Heart left ventricle (tissue), 16 donors: ENCODE measurements at regions of chr16 and their contacts with region 1.

Region 1: GRCh38 chr16:78122774-78123315 is 23.4 kb downstream of the WWOX start:
- DNase-seq: no peak
- ATAC-seq: peak; percentile 67 to 89 (median 68)
- H3K4me3 ChIP-seq: no peak overlapping the region
- H3K27ac ChIP-seq: peak overlapping the region in 6 of 12 donors; percentile 4 to 44 (median 14)
- H3K4me1 ChIP-seq: peaks cover 0 to 20% (median 11%) of the 10 kb centered on the region in 12 donors
- H3K27me3 ChIP-seq: no peaks in the 10 kb centered on the region
- CTCF ChIP-seq: peak; percentile 21 to 72 (median 53)
- POLR2A ChIP-seq: no peak

Region 2: GRCh38 chr16:78099372-78100161 is 23.3 kb before region 1 on chr16 and contains the start of gene WWOX:
- intact Hi-C with region 1: no loop called
- DNase-seq: peak; percentile 95 to 98 (median 97)
- ATAC-seq: peak; percentile 96 to 98 (median 98)
- H3K4me3 ChIP-seq: peak within 1 kb of the TSS; percentile 71 to 100 (median 90)
- H3K27ac ChIP-seq: peak within 1 kb of the TSS; percentile 60 to 94 (median 87)
- H3K4me1 ChIP-seq: peaks cover 0 to 17% (median 8%) of the 10 kb centered on the region in 12 donors
- H3K27me3 ChIP-seq: peaks cover 0 to 5% (median 0%) of the 10 kb centered on the region in 9 donors
- CTCF ChIP-seq: peak; percentile 69 to 90 (median 82)
- POLR2A ChIP-seq: peak in 1 of 2 donors; percentile 81
- total RNA-seq, gene WWOX: 4.3 to 18.3 (median 10.1) TPM

Region 3: DNA sequence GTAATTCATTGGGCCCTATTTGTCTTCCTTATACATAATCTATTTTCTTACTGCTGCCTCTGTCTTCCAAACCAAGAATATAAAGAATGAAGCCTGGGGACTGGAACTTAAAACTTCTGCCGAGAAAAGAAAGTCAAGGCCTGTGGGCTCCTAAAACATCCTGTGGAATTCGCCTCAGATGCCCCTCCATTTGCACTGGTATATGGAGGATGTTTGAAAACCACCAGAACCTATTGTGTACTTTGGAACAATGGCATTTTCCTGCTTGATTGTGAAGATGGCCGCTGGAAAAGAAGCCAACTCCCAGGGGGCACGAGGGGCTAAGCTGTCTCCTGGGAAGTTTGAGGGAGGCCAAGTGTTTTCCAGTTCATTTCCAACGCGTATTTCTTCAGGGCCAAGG is 99.0 kb after region 1 on chr16:
- intact Hi-C with region 1: loop called in 3 of 10 experiments (anchors 2 to 5 kb)
- DNase-seq: no peak
- ATAC-seq: no peak
- H3K4me3 ChIP-seq: no peak overlapping the region
- H3K27ac ChIP-seq: no peak overlapping the region
- H3K4me1 ChIP-seq: peaks cover 0 to 10% (median 0%) of the 10 kb centered on the region in 12 donors
- H3K27me3 ChIP-seq: no peaks in the 10 kb centered on the region
- CTCF ChIP-seq: no peak
- POLR2A ChIP-seq: no peak

Region 4: DNA sequence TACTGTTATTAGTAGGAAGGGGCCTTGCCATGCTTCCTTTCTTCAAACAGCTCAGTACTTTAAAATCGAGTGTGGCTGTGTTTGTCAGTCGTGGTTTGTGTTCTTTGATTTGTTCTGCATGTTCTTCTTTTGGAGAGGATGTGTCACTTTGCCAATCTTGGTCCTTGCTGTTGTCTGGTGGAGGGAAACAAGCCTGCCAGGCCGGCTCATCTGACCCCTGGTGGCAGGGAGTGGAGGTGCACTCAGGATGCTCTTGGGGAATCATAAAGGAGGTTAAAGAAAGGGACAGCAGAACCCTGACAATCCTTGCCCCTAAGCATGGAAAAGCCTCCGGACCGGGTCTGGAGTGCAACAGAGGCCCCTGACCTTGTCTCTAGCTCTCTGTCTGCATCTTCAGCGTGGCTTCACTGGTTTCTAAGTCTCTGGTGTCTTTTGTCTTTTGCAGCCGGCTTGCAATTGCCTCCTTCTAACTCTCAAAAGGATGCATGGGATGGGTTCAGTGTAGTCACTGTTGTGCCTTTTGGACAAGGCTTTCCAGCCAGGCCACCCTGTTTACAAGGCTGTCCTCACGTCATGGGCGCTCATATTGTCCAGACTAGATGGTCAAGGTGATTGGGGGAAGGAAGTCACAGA is 112.4 kb after region 1 on chr16:
- intact Hi-C with region 1: loop called (anchors 2 to 5 kb)
- DNase-seq: peak; percentile 47 to 76 (median 55)
- ATAC-seq: peak; percentile 33 to 76 (median 66)
- H3K4me3 ChIP-seq: no peak overlapping the region
- H3K27ac ChIP-seq: no peak overlapping the region
- H3K4me1 ChIP-seq: peaks cover 0 to 18% (median 5%) of the 10 kb centered on the region in 12 donors
- H3K27me3 ChIP-seq: no peaks in the 10 kb centered on the region
- CTCF ChIP-seq: peak; percentile 73 to 94 (median 87)
- POLR2A ChIP-seq: no peak

Region 5: GRCh38 chr16:78503602-78504001 is 380.8 kb after region 1 on chr16:
- intact Hi-C with region 1: loop called in 4 of 10 experiments (anchors 5 to 10 kb)
- DNase-seq: peak in 2 of 5 donors; percentile 53 to 62
- ATAC-seq: no peak
- H3K4me3 ChIP-seq: no peak overlapping the region
- H3K27ac ChIP-seq: no peak overlapping the region
- H3K4me1 ChIP-seq: peaks cover 0 to 41% (median 10%) of the 10 kb centered on the region in 12 donors
- H3K27me3 ChIP-seq: no peaks in the 10 kb centered on the region
- CTCF ChIP-seq: peak; percentile 83 to 92 (median 89)
- POLR2A ChIP-seq: no peak

Region 6: GRCh38 chr16:78770353-78771091 is 647.7 kb after region 1 on chr16:
- intact Hi-C with region 1: loop called in 3 of 10 experiments (anchors 10 kb)
- DNase-seq: peak; percentile 70 to 90 (median 77)
- ATAC-seq: peak; percentile 75 to 88 (median 83)
- H3K4me3 ChIP-seq: no peak overlapping the region
- H3K27ac ChIP-seq: peak overlapping the region in 1 of 12 donors; percentile 37
- H3K4me1 ChIP-seq: peaks cover 0 to 19% (median 5%) of the 10 kb centered on the region in 12 donors
- H3K27me3 ChIP-seq: no peaks in the 10 kb centered on the region
- CTCF ChIP-seq: peak; percentile 78 to 97 (median 90)
- POLR2A ChIP-seq: no peak